ENCODE measurements at regions of chr19 and their contacts with region 1.

Region 1: GRCh38 chr19:12162882-12163806 is at the start of gene ZNF136:
- DNase-seq: peak; percentile 99
- CTCF ChIP-seq: no peak

Region 2: GRCh38 chr19:12036154-12036535 is 127.0 kb before region 1 on chr19:
- CTCF ChIA-PET with region 1: no interaction called
- POLR2A ChIA-PET with region 1: no interaction called
- DNase-seq: no peak
- CTCF ChIP-seq: no peak

Region 3: GRCh38 chr19:12180377-12180776 is 17.2 kb after region 1 on chr19:
- CTCF ChIA-PET with region 1: interaction called, 13 read pairs
- POLR2A ChIA-PET with region 1: no interaction called
- DNase-seq: no peak
- CTCF ChIP-seq: no peak

Region 4: GRCh38 chr19:12202250-12202649 is 39.1 kb after region 1 on chr19:
- CTCF ChIA-PET with region 1: no interaction called
- POLR2A ChIA-PET with region 1: no interaction called
- DNase-seq: no peak
- CTCF ChIP-seq: no peak

Measured in GM10248 (cell line).